B cell (primary cell): ENCODE measurements at regions of chr2 and their contacts with region 1.

Region 1: DNA sequence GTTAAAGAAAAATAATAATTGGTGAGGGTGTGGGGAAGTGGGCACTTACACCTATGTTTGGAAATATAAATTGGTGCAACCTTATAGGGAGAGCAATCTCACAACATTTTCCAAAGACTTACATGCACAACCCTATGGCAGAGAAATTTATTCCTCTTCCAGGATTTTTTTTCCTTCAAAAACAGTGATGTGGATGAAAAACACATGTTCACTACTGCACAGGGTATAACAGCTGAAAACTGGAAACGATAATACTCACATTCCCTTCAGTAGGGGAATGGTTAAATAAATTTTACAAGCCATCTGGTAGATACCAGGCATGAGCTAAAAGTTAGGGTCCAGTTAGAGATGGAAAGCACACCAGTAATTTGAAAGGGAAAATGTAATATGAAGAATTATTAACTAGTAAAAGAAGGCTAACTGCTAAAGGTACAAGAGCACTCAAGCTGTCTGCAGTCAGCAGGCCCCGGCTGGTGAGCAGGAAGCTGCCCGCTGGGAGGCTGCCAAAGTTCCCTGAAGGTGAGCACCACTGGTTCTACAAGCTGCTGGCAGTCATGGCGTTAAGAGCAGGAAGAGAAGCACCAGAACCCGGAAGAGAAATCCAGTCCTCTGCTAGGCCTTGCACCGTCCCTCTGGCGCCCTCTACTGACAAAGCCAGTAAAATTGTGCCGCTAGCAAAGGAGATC is 28.4 kb upstream of the CASP8 start:
- DNase-seq: peak; percentile 93
- ATAC-seq: peak; percentile 56
- H3K4me3 ChIP-seq: peak overlapping the region in 3 of 5 experiments; percentile 3 to 43 (median 25)
- H3K4me3 Mint-ChIP-seq: peak overlapping the region; percentile 94
- H3K27ac ChIP-seq: peak overlapping the region in 1 of 2 donors; percentile 24
- H3K27ac Mint-ChIP-seq: peak overlapping the region; percentile 84
- H3K4me1 ChIP-seq: peaks cover 41 to 49% of the 10 kb centered on the region in 2 donors
- H3K4me1 Mint-ChIP-seq: peaks cover 53% of the 10 kb centered on the region
- H3K27me3 ChIP-seq: no peaks in the 10 kb centered on the region
- H3K27me3 Mint-ChIP-seq: no peaks in the 10 kb centered on the region
- CTCF ChIP-seq: peak; percentile 97

Region 2: DNA sequence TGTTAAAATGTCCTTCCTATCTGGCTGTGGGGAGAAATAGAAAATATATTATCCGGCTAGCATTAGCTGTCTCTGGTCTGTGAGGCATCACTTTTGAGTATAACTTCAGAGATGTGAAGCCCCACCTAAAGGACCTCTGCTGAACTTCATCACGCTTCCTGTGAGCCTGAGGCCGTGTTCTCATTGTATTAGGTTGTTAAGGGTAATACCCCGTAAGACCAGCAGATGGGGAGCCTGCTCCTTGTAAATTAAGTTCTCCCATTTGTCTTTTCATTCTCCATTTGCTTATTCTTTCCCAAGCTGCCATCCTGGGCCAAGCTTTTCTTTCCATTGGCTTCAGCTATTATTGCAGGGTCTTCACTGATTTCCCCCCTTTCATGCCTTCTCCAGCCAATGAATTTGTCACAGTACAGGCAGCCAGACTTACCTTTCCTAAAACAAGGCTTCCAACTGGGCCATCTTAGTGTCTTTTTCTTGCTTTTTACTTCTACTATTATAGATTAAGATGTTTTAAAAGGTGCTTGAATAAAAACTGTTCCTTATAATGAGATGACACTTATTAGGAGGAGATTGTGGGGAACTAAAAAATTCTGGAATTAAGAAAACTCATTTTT is 330.4 kb before region 1 on chr2:
- CTCF ChIA-PET with region 1: interaction called, 57 read pairs
- POLR2A ChIA-PET with region 1: no interaction called
- intact Hi-C with region 1: loop called (anchors 1 kb)
- DNase-seq: peak; percentile 86
- ATAC-seq: peak; percentile 100
- H3K4me3 ChIP-seq: no peak overlapping the region
- H3K4me3 Mint-ChIP-seq: no peak overlapping the region
- H3K27ac ChIP-seq: peak overlapping the region in 1 of 2 donors; percentile 40
- H3K27ac Mint-ChIP-seq: no peak overlapping the region
- H3K4me1 ChIP-seq: no peaks in the 10 kb centered on the region
- H3K4me1 Mint-ChIP-seq: peaks cover 4% of the 10 kb centered on the region
- H3K27me3 ChIP-seq: no peaks in the 10 kb centered on the region
- H3K27me3 Mint-ChIP-seq: no peaks in the 10 kb centered on the region
- CTCF ChIP-seq: peak; percentile 94

Region 3: GRCh38 chr2:200985799-200986198 is 246.1 kb before region 1 on chr2:
- CTCF ChIA-PET with region 1: no interaction called
- POLR2A ChIA-PET with region 1: no interaction called
- intact Hi-C with region 1: no loop called
- DNase-seq: no peak
- ATAC-seq: no peak
- H3K4me3 ChIP-seq: no peak overlapping the region
- H3K4me3 Mint-ChIP-seq: no peak overlapping the region
- H3K27ac ChIP-seq: no peak overlapping the region
- H3K27ac Mint-ChIP-seq: no peak overlapping the region
- H3K4me1 ChIP-seq: no peaks in the 10 kb centered on the region
- H3K4me1 Mint-ChIP-seq: no peaks in the 10 kb centered on the region
- H3K27me3 ChIP-seq: no peaks in the 10 kb centered on the region
- H3K27me3 Mint-ChIP-seq: no peaks in the 10 kb centered on the region
- CTCF ChIP-seq: no peak

Region 4: DNA sequence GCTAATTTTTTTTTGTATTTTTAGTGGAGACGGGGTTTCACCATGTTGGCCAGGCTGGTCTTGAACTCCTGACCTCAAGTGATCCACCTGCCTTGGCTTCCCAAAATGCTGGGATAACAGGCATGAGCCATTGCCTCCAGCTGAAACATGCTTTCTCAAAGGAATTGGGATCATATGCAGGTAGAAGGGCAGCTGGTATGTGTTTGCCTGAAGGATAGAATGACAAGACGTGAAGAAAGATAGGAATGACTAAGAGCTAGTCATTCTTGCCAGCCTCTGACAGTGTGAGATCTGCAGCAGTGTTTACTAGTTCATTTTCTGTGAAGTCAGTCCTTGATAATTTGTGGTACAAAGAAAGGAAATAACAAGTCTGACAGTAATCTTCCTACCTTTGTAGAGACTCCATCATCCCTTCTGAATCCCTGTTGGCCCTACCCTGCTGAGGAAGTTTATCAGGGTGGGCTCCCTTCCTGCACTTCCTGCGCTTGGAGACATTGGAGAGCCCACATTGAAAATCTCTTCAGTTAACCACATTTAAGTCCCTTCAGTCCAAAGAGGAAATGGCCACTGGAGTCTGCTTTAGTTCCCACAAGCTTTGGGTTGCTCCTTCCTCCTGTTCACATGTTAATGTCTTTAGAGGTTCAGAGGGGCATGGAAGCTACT is 101.3 kb before region 1 on chr2:
- CTCF ChIA-PET with region 1: interaction called, 10 read pairs
- POLR2A ChIA-PET with region 1: interaction called, 3 read pairs
- intact Hi-C with region 1: no loop called
- DNase-seq: peak; percentile 31
- ATAC-seq: no peak
- H3K4me3 ChIP-seq: no peak overlapping the region
- H3K4me3 Mint-ChIP-seq: peak overlapping the region; percentile 60
- H3K27ac ChIP-seq: peak overlapping the region; percentile 24 to 45
- H3K27ac Mint-ChIP-seq: peak overlapping the region; percentile 82
- H3K4me1 ChIP-seq: peaks cover 63 to 67% of the 10 kb centered on the region in 2 donors
- H3K4me1 Mint-ChIP-seq: peaks cover 71% of the 10 kb centered on the region
- H3K27me3 ChIP-seq: no peaks in the 10 kb centered on the region
- H3K27me3 Mint-ChIP-seq: no peaks in the 10 kb centered on the region
- CTCF ChIP-seq: no peak

Region 5: DNA sequence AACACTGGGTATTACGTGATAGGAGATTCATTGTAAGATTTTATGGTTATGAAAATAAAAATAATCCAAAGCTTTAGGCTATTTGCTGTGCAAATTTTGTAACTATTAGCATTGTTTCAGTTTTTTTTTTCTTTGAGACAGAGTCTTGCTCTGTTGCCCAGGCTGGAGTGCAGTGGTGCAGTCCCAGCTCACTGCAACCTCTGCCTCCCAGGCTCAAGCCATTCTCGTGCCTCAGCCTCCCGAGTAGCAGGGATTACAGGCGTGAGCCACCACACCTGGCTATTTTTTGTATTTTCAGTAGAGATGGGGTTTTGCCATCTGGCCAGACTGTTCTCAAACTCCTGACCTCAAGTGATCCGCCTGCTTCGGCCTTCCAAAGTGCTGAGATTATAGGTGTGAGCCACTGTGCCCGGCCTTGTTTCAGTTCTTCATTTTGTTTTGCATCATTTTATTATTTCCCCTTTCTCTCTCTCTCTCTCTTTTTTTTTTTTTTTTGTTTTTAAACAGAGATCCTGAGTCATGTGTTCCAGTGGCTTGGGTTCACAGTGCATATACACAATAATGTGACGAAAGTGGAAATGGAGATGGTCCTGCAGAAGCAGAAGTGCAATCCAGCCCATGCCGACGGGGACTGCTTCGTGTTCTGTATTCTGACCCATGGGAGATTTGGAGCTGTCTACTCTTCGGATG is 23.2 kb before region 1 on chr2:
- CTCF ChIA-PET with region 1: interaction called, 74 read pairs
- POLR2A ChIA-PET with region 1: interaction called, 6 read pairs
- intact Hi-C with region 1: loop called (anchors 1 kb)
- DNase-seq: peak; percentile 90
- ATAC-seq: peak; percentile 85
- H3K4me3 ChIP-seq: peak overlapping the region in 3 of 5 experiments; percentile 8 to 40 (median 31)
- H3K4me3 Mint-ChIP-seq: peak overlapping the region; percentile 68
- H3K27ac ChIP-seq: peak overlapping the region; percentile 60 to 76
- H3K27ac Mint-ChIP-seq: peak overlapping the region; percentile 94
- H3K4me1 ChIP-seq: peaks cover 34 to 42% of the 10 kb centered on the region in 2 donors
- H3K4me1 Mint-ChIP-seq: peaks cover 58% of the 10 kb centered on the region
- H3K27me3 ChIP-seq: no peaks in the 10 kb centered on the region
- H3K27me3 Mint-ChIP-seq: no peaks in the 10 kb centered on the region
- CTCF ChIP-seq: no peak

Region 6: GRCh38 chr2:201263779-201264178 is 31.9 kb after region 1 on chr2:
- CTCF ChIA-PET with region 1: interaction called, 123 read pairs
- POLR2A ChIA-PET with region 1: interaction called, 14 read pairs
- intact Hi-C with region 1: loop called (anchors 1 kb)
- DNase-seq: no peak
- ATAC-seq: no peak
- H3K4me3 ChIP-seq: no peak overlapping the region
- H3K4me3 Mint-ChIP-seq: peak overlapping the region; percentile 46
- H3K27ac ChIP-seq: peak overlapping the region in 1 of 2 donors; percentile 37
- H3K27ac Mint-ChIP-seq: peak overlapping the region; percentile 37
- H3K4me1 ChIP-seq: peaks cover 51 to 53% of the 10 kb centered on the region in 2 donors
- H3K4me1 Mint-ChIP-seq: peaks cover 73% of the 10 kb centered on the region
- H3K27me3 ChIP-seq: no peaks in the 10 kb centered on the region
- H3K27me3 Mint-ChIP-seq: no peaks in the 10 kb centered on the region
- CTCF ChIP-seq: no peak

Region 7: GRCh38 chr2:201451292-201452057 is 219.6 kb after region 1 on chr2 and contains the starts of genes STRADB and TRAK2:
- CTCF ChIA-PET with region 1: interaction called, 5 read pairs
- POLR2A ChIA-PET with region 1: interaction called, 5 read pairs
- intact Hi-C with region 1: loop called (anchors 1 kb)
- DNase-seq: peak; percentile 98
- ATAC-seq: peak; percentile 92
- H3K4me3 ChIP-seq: peak within 1 kb of the TSS; percentile 61 to 94 (median 69)
- H3K4me3 Mint-ChIP-seq: peak within 1 kb of the TSS; percentile 97
- H3K27ac ChIP-seq: peak within 1 kb of the TSS; percentile 54 to 88
- H3K27ac Mint-ChIP-seq: peak within 1 kb of the TSS; percentile 96
- H3K4me1 ChIP-seq: peaks cover 39 to 43% of the 10 kb centered on the region in 2 donors
- H3K4me1 Mint-ChIP-seq: peaks cover 41% of the 10 kb centered on the region
- H3K27me3 ChIP-seq: no peaks in the 10 kb centered on the region
- H3K27me3 Mint-ChIP-seq: no peaks in the 10 kb centered on the region
- CTCF ChIP-seq: peak; percentile 48
- total RNA-seq, gene STRADB: 17.5 and 20.6 TPM in 2 replicates
- total RNA-seq, gene TRAK2: 21.6 and 24.5 TPM in 2 replicates

Region 8: GRCh38 chr2:202375609-202376408 is 1143.9 kb after region 1 on chr2 and contains the start of gene BMPR2:
- CTCF ChIA-PET with region 1: no interaction called
- POLR2A ChIA-PET with region 1: no interaction called
- intact Hi-C with region 1: loop called (anchors 10 kb)
- DNase-seq: peak; percentile 91
- ATAC-seq: peak; percentile 78
- H3K4me3 ChIP-seq: peak within 1 kb of the TSS; percentile 72 to 96 (median 91)
- H3K4me3 Mint-ChIP-seq: peak within 1 kb of the TSS; percentile 98
- H3K27ac ChIP-seq: peak within 1 kb of the TSS; percentile 58 to 67
- H3K27ac Mint-ChIP-seq: peak within 1 kb of the TSS; percentile 93
- H3K4me1 ChIP-seq: peaks cover 13 to 24% of the 10 kb centered on the region in 2 donors
- H3K4me1 Mint-ChIP-seq: peaks cover 26% of the 10 kb centered on the region
- H3K27me3 ChIP-seq: no peaks in the 10 kb centered on the region
- H3K27me3 Mint-ChIP-seq: no peaks in the 10 kb centered on the region
- CTCF ChIP-seq: no peak
- total RNA-seq, gene BMPR2: 24.6 and 27.2 TPM in 2 replicates